ENCODE measurements at regions of chr2 and their contacts with region 1.

Region 1: GRCh38 chr2:147082850-147083522 is 761.8 kb upstream of the ACVR2A start:
- DNase-seq: peak; percentile 12
- H3K4me3 ChIP-seq: no peak overlapping the region
- H3K27me3 ChIP-seq: no peaks in the 10 kb centered on the region
- CTCF ChIP-seq: peak; percentile 87

Region 2: DNA sequence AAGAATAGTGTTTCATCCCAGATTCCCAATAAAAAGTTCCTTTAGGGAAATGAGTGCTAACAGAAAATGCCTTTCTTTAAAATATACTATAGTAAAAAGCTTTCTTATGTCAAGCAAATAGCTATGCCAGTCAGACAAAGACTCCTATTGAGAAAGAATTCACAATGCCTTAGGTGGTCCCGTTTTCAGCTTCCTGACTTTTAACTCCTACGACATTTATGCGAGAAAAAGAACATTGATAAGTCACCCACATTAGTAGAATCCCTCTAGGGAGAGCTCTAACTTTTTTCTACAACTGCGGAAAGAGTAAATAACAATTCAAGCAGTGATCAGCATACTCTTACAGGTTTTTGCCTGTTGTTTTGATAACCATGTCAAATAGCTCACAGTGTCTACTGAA is 11.1 kb after region 1 on chr2:
- CTCF ChIA-PET with region 1: interaction called, 16 read pairs
- POLR2A ChIA-PET with region 1: no interaction called
- DNase-seq: no peak
- H3K4me3 ChIP-seq: no peak overlapping the region
- H3K27me3 ChIP-seq: no peaks in the 10 kb centered on the region
- CTCF ChIP-seq: no peak

Region 3: GRCh38 chr2:147099837-147100720 is 17.1 kb after region 1 on chr2:
- CTCF ChIA-PET with region 1: interaction called, 16 read pairs
- POLR2A ChIA-PET with region 1: no interaction called
- DNase-seq: no peak
- H3K4me3 ChIP-seq: no peak overlapping the region
- H3K27me3 ChIP-seq: no peaks in the 10 kb centered on the region
- CTCF ChIP-seq: no peak

Region 4: DNA sequence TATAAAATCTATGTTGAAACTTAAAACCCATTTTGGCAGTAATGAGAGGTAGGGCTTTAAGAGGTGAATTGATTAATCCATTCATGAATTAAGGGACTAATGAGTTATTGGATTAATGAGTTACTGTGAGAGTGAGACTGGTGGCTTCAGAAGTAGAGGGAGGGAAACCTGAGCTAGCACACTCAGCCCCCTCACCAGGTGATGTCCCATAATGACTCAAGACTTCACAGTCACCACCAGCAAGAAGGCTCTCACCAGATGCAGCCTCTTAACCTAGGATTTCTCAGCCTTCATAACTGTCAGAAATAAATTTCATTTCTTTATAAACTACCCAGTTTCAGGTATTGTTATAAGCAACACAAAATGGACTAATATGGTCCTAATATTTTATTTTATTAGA is 140.1 kb after region 1 on chr2:
- CTCF ChIA-PET with region 1: no interaction called
- POLR2A ChIA-PET with region 1: no interaction called
- DNase-seq: no peak
- H3K4me3 ChIP-seq: no peak overlapping the region
- H3K27me3 ChIP-seq: no peaks in the 10 kb centered on the region
- CTCF ChIP-seq: no peak

Region 5: DNA sequence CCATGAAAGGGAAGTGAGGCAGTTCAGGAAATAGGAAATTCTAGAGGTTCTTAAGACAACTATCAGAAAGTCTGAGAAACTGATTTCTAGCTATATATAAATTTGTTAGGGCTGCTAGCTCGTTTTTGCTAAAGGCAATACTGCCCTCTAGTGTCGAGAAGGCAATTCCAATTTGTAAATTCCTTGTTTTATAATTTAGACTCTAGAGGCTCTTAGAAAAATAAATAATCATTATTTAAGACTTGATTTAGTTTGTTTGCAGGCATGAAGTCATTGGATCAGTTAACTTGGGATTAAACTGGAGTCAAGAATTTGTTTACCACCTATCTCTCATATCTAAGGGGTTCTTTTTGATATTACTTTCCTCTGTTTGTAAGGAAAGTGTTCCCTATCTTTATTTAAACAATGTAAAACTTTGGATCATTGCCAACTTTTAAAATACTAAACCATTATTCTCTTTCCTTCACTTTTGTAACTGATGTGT is 828.0 kb after region 1 on chr2:
- CTCF ChIA-PET with region 1: interaction called, 12 read pairs
- POLR2A ChIA-PET with region 1: no interaction called
- DNase-seq: no peak
- H3K4me3 ChIP-seq: no peak overlapping the region
- H3K27me3 ChIP-seq: no peaks in the 10 kb centered on the region
- CTCF ChIP-seq: peak; percentile 62